Activated CD8-positive, alpha-beta T cell treated with anti-CD3 and anti-CD28 coated beads for 36 hours (primary cell): ENCODE measurements at regions of chr16 and their contacts with region 1.

Region 1: DNA sequence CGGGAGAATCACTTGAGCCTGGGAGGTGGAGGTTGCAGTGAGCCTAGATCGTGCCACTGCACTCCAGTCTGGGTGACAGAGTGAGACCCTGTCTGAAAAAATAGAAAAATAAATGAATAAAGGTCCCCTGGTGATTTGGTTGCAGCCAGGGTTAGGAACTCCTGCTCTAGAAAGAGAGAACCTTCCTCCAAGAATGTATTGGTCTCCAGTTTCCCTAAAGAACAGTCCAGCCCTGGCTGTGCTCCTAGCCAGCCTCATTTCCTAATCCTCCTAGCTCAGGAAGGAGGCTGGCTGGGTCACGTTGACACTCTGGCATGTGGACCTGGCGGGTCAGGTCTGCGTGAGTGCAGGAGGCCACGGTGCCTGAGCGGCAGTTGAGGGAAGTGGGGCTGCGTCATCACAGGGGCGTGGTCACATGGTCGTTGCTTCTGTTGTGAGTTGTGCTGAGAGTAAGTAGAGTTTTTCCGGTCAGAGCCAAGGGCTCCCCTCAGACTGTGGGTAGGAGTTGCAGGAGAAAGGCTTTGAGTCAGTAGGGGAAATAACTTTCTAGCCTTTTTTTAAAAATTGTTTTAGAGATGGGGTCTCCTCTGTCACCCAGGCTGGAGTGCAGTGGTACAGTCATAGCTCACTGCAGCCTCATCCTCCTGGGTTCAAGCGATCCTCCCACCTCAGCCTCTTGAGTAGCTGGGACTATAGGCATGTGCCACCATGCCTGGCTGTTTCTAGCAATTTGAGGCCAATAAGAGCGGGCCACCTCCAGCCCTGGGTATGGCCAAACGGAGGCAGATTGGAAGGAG is 193.9 kb upstream of the CIBAR2 start:
- DNase-seq: peak; percentile 98
- ATAC-seq: peak; percentile 85
- H3K4me3 Mint-ChIP-seq: peak overlapping the region; percentile 44
- H3K27ac Mint-ChIP-seq: peak overlapping the region; percentile 94
- H3K4me1 Mint-ChIP-seq: peaks cover 54% of the 10 kb centered on the region
- H3K27me3 Mint-ChIP-seq: no peaks in the 10 kb centered on the region
- CTCF ChIP-seq: no peak

Region 2: DNA sequence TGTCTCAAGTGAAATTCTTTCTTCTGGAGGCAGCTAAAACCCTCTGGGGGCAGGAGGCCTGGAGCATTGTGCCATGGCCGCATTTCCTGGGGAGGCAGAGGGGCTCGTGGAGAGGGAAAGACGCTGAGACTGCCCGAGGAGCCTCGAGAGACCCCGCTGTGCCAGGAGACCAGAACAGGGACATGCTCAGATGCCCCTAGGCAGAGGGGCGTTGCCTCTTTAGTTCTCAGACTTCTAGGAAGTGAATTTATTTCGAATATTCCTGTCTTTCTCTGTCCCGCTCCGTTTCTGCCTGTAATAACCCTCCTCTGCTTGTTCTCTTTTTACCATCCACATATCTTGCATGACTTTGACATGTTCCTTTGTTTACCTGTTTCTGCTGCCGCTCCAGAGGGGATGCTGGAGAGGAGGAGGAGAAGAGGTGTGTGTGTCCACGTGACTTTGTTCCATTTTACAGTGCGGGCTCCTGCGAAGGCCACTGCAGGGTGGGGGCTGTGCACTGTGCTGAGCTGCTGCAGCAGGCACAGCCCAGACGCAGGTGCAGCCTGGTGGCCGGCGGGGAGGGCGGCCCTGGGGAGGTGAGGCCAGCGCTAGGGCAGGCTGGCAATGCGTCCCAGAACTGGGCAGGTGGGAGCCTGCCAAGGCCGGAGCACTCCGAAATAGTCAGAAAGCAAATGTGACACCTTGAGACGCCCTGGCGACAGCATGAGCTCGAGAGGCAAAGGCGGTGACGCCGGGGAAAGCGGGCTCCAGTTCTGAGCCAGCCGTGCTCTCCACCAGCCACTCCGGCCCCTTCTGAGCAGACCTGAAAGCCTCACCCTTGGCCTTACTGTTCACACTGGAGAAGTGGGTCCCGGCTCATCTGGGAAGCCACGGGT is 223.8 kb before region 1 on chr16:
- CTCF ChIA-PET with region 1: no interaction called
- POLR2A ChIA-PET with region 1: no interaction called
- intact Hi-C with region 1: no loop called
- DNase-seq: no peak
- ATAC-seq: no peak
- H3K4me3 Mint-ChIP-seq: no peak overlapping the region
- H3K27ac Mint-ChIP-seq: no peak overlapping the region
- H3K4me1 Mint-ChIP-seq: peaks cover 23% of the 10 kb centered on the region
- H3K27me3 Mint-ChIP-seq: no peaks in the 10 kb centered on the region
- CTCF ChIP-seq: no peak

Region 3: DNA sequence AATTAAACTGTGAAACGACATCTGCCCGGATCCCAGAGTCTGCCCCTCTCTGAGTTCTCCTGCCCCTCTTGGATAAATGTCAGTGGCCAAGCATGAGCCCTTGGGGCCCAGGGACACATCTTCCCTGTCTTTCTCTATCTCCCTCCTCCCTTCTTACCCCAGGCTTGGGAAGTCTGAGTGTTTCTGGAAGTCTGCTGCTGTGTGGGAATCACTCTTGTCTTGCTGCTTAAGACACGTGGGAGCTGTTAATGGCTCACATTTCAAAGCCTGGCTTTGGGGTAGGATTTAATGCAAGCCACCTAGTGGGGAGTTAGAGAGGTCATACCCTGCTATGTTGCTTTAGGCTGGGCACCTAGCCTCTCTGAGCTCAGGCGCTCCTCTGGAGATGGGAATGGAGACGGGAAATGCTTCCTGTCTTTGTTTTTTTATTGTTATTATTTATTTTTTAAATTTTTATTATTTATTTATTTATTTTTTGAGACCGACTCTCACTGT is 24.5 kb after region 1 on chr16:
- CTCF ChIA-PET with region 1: interaction called, 13 read pairs
- POLR2A ChIA-PET with region 1: interaction called, 5 read pairs
- intact Hi-C with region 1: no loop called
- DNase-seq: peak; percentile 37
- ATAC-seq: peak; percentile 61
- H3K4me3 Mint-ChIP-seq: no peak overlapping the region
- H3K27ac Mint-ChIP-seq: peak overlapping the region; percentile 6
- H3K4me1 Mint-ChIP-seq: peaks cover 19% of the 10 kb centered on the region
- H3K27me3 Mint-ChIP-seq: no peaks in the 10 kb centered on the region
- CTCF ChIP-seq: peak; percentile 46